H1 (cell line): ENCODE measurements at regions of chr7 and their contacts with region 1.

Region 1: GRCh38 chr7:35593896-35594295 is 101.0 kb downstream of the HERPUD2 start:
- DNase-seq: peak; percentile 23 to 86
- H3K4me3 ChIP-seq: no peak overlapping the region
- H3K27ac ChIP-seq: no peak overlapping the region
- H3K4me1 ChIP-seq: no peaks in the 10 kb centered on the region
- H3K27me3 ChIP-seq: no peaks in the 10 kb centered on the region
- CTCF ChIP-seq: peak; percentile 70 to 78 (median 74)
- EP300 ChIP-seq: no peak
- POLR2A ChIP-seq: no peak
- RAD21 ChIP-seq: peak; percentile 40 to 57

Region 2: DNA sequence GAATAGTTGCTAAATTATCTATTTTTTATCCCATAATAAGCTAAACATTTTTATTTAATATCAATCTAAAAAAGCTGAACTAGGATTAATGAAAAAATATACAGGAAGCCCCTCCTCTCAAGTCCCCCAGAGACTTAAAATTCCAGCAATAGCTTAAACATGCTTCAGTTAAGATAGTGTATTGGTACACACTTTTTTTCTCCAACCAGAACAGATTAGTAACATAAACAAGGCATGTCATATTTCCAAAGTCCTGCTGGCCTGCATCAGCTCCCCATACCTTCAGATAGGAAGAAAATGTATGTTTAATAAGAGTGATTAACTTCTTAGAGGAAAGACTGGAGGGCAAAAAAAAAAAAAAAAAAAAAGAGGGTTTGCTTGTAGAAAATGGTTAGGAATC is 347.1 kb before region 1 on chr7:
- CTCF ChIA-PET with region 1: interaction called, 10 read pairs
- POLR2A ChIA-PET with region 1: no interaction called
- DNase-seq: no peak
- H3K4me3 ChIP-seq: no peak overlapping the region
- H3K27ac ChIP-seq: no peak overlapping the region
- H3K4me1 ChIP-seq: peaks cover 0 to 7% (median 4%) of the 10 kb centered on the region in 4 experiments; a peak in 5 of 7 replicates
- H3K27me3 ChIP-seq: peaks cover 24 to 46% (median 38%) of the 10 kb centered on the region in 4 experiments
- CTCF ChIP-seq: no peak
- EP300 ChIP-seq: no peak
- POLR2A ChIP-seq: no peak
- RAD21 ChIP-seq: no peak

Region 3: DNA sequence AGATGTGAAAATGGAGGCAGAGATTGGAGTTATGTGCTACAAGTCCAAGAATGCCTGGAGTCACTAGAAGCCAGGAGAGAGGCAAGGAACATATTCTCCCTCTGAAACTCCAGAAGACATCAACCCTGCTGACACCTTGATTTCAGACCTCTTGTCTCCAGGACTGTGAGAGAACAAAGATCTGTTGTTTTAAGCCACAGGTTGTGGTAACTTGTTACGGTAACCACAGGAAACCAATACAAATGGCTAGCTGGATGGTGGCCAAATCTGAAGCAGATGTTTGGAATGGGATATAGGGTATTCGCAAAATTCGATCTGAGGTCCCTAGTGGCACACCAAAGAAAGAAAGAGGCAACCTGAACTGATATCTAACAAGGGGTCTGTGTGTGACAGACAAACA is 28.0 kb before region 1 on chr7:
- CTCF ChIA-PET with region 1: interaction called, 22 read pairs
- POLR2A ChIA-PET with region 1: no interaction called
- DNase-seq: no peak
- H3K4me3 ChIP-seq: no peak overlapping the region
- H3K27ac ChIP-seq: no peak overlapping the region
- H3K4me1 ChIP-seq: no peaks in the 10 kb centered on the region
- H3K27me3 ChIP-seq: no peaks in the 10 kb centered on the region
- CTCF ChIP-seq: no peak
- EP300 ChIP-seq: no peak
- POLR2A ChIP-seq: no peak
- RAD21 ChIP-seq: no peak

Region 4: DNA sequence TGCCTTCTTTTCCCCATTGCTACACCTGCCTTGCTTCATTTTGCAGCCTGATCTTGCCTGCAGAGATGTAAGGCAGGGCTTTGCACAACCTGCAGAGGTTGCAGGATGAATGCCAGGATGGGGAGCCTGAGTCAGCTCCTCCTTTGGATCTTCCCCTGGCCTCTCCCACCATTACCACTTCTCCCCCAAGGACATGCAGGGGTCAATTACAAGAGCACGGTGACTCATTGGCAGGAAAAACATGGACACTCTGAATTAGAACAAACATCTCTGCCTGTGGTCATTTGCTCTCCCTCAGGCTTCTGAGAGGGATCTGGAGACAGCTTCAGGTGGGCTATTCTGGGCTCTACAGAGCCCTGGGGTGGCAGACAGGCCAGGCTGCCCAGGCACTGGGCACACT is 11.9 kb after region 1 on chr7:
- CTCF ChIA-PET with region 1: interaction called, 85 read pairs
- POLR2A ChIA-PET with region 1: interaction called, 3 read pairs
- DNase-seq: no peak
- H3K4me3 ChIP-seq: no peak overlapping the region
- H3K27ac ChIP-seq: no peak overlapping the region
- H3K4me1 ChIP-seq: no peaks in the 10 kb centered on the region
- H3K27me3 ChIP-seq: no peaks in the 10 kb centered on the region
- CTCF ChIP-seq: no peak
- EP300 ChIP-seq: no peak
- POLR2A ChIP-seq: no peak
- RAD21 ChIP-seq: no peak

Region 5: DNA sequence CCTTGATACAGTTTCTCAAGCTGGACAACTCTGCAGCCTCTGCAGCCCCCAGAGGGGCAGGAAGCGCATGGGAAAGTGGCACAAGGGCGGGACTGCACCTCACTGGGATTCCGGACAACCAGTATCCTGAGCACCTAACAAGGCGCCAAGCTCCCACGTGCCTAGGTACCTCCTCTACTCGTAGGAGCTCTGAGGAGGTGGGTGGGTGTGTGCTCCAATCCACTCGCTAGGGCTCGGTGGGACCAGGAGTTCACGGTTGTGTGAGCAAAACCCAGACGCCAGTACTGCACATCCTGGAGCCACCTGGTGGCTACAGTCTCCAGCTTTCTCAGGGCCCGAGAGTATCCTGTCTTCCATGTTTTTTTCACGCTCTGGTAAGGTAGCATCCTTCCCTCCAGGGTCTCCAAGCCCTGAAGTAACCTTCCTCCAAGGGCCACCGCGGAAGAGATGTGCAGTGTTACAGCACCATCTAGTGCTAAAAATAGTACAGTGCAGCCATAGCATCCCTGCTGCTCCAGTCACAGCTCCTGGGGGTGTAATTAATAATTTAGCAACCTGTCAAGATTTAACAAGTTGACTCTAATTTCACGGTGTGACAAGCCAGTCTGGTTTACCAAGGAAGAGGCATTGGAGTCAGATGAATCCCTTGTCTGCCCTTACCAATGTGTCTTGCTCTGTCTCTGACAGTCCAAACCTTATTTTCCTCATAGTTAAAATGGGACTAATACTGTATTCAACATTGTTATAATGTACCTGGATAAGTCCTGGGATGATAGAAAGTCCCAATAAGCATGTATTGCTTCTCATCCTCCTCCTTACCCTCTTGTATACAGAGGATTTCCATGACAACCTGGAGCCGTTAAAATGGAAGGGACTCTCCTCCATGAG is 30.6 kb after region 1 on chr7:
- CTCF ChIA-PET with region 1: interaction called, 11 read pairs
- POLR2A ChIA-PET with region 1: interaction called, 3 read pairs
- DNase-seq: peak; percentile 29 to 64
- H3K4me3 ChIP-seq: no peak overlapping the region
- H3K27ac ChIP-seq: no peak overlapping the region
- H3K4me1 ChIP-seq: peaks cover 0 to 2% (median 0%) of the 10 kb centered on the region in 4 experiments; a peak in 3 of 7 replicates
- H3K27me3 ChIP-seq: no peaks in the 10 kb centered on the region
- CTCF ChIP-seq: peak; percentile 50 to 86 (median 84)
- EP300 ChIP-seq: no peak
- POLR2A ChIP-seq: no peak
- RAD21 ChIP-seq: peak; percentile 95 to 97

Region 6: DNA sequence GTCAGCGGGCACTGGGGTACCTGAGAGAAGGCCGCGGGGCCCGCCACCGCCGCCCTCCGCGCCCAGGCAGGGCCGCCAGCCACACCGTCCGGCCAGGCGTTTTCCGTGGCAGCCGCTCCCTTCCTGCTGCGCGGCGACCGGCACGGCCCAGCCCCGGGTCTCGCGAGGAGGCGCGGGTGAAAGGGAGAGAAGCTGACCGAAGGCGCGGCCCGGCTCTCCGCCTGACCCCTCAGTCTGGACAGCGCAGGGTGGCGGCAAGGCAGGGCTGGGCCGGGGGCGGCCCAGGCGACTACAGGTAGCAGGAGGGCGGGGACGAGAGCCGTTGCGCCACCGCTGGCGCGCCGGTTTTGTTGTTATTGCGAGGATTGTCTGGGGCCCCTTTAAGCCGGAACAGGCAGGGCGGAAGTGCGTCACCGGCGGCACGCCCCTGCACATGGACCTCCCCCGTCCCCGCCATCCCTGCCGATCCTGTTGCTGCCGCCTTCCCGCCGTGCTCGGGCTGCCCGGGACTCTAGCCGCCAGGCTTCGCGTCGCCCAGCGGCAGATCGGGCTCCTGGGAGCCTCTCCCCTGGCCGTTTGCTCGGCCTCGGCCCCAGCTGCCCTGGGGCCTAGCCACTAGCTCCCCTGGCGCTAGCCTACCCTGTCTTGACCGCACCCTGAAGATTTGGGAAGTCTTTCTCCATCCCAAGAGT is 101.0 kb after region 1 on chr7 and contains the start of gene HERPUD2:
- CTCF ChIA-PET with region 1: no interaction called
- POLR2A ChIA-PET with region 1: no interaction called
- DNase-seq: peak; percentile 79 to 91
- H3K4me3 ChIP-seq: peak within 1 kb of the TSS; percentile 83 to 90 (median 87)
- H3K27ac ChIP-seq: peak within 1 kb of the TSS; percentile 93
- H3K4me1 ChIP-seq: peaks cover 2 to 6% (median 4%) of the 10 kb centered on the region in 4 experiments; a peak in 5 of 7 replicates
- H3K27me3 ChIP-seq: no peaks in the 10 kb centered on the region; a peak in 3 of 7 replicates
- CTCF ChIP-seq: no peak
- EP300 ChIP-seq: peak in 1 of 2 experiments; percentile 23; a peak in 1 of 3 replicates
- POLR2A ChIP-seq: peak; percentile 86 to 93
- RAD21 ChIP-seq: no peak; a peak in 1 of 4 replicates
- total RNA-seq, gene HERPUD2: 15.6 and 18.3 TPM in 2 replicates

Region 7: GRCh38 chr7:36010656-36011587 is 417.0 kb after region 1 on chr7:
- CTCF ChIA-PET with region 1: no interaction called
- POLR2A ChIA-PET with region 1: no interaction called
- DNase-seq: no peak
- H3K4me3 ChIP-seq: no peak overlapping the region
- H3K27ac ChIP-seq: no peak overlapping the region
- H3K4me1 ChIP-seq: peaks cover 0 to 12% (median 7%) of the 10 kb centered on the region in 4 experiments; a peak in 6 of 7 replicates
- H3K27me3 ChIP-seq: peaks cover 0 to 2% (median 0%) of the 10 kb centered on the region in 4 experiments; a peak in 2 of 7 replicates
- CTCF ChIP-seq: no peak
- EP300 ChIP-seq: no peak
- POLR2A ChIP-seq: no peak
- RAD21 ChIP-seq: no peak